Prostate gland (tissue), 2 donors: ENCODE measurements at regions of chrX and their contacts with region 1.

Region 1: GRCh38 chrX:67543818-67544217 is at the start of gene AR:
- DNase-seq: peak; percentile 69
- H3K4me3 ChIP-seq: peak within 1 kb of the TSS; percentile 46 to 53
- H3K27ac ChIP-seq: peak within 1 kb of the TSS; percentile 81 to 83
- H3K4me1 ChIP-seq: no peaks in the 10 kb centered on the region
- H3K27me3 ChIP-seq: no peaks in the 10 kb centered on the region
- CTCF ChIP-seq: peak in 1 of 4 experiments; percentile 15
- POLR2A ChIP-seq: peak; percentile 54
- total RNA-seq, gene AR: 77.4 to 119 TPM

Region 2: DNA sequence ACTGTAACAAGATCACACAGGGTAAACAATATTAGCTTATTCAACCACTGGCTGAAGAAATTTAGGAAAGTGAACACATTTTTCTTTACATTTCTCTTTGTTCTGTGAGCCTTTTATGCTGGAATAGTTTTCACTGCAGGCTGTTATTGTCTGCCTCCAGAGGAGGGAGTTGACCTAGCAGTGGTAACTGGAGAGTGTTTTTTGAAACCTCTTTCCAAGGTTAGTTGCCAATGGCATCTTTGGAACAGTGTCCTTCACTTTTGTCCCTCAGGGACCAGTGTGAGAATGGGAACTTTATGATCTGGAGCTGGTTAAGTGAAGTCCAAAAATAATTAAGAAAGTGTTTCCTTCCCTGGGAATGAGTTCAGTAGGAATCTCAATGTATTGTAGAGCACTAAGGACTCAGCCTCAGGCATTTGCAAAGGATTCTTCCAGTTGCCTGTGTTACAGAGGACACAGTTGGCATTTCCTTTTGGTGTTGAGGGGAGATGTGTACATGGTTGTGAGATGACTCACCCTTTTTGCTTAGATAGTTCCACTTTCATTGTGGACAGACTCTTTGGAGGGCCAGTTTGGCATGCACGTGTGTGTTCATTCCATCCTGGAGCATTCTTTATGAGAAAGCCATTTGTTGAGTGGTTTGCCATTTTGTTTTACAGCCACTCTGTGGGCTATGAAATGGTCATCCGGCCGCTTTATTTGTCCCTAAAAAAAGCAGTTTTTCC is 61.3 kb after region 1 on chrX:
- intact Hi-C with region 1: loop called (anchors 10 kb)
- DNase-seq: no peak
- H3K4me3 ChIP-seq: no peak overlapping the region
- H3K27ac ChIP-seq: no peak overlapping the region
- H3K4me1 ChIP-seq: no peaks in the 10 kb centered on the region
- H3K27me3 ChIP-seq: no peaks in the 10 kb centered on the region
- CTCF ChIP-seq: no peak
- POLR2A ChIP-seq: no peak

Region 3: GRCh38 chrX:67636532-67636931 is 92.7 kb after region 1 on chrX:
- intact Hi-C with region 1: no loop called
- DNase-seq: no peak
- H3K4me3 ChIP-seq: no peak overlapping the region
- H3K27ac ChIP-seq: no peak overlapping the region
- H3K4me1 ChIP-seq: no peaks in the 10 kb centered on the region
- H3K27me3 ChIP-seq: no peaks in the 10 kb centered on the region
- CTCF ChIP-seq: no peak
- POLR2A ChIP-seq: no peak

Region 4: DNA sequence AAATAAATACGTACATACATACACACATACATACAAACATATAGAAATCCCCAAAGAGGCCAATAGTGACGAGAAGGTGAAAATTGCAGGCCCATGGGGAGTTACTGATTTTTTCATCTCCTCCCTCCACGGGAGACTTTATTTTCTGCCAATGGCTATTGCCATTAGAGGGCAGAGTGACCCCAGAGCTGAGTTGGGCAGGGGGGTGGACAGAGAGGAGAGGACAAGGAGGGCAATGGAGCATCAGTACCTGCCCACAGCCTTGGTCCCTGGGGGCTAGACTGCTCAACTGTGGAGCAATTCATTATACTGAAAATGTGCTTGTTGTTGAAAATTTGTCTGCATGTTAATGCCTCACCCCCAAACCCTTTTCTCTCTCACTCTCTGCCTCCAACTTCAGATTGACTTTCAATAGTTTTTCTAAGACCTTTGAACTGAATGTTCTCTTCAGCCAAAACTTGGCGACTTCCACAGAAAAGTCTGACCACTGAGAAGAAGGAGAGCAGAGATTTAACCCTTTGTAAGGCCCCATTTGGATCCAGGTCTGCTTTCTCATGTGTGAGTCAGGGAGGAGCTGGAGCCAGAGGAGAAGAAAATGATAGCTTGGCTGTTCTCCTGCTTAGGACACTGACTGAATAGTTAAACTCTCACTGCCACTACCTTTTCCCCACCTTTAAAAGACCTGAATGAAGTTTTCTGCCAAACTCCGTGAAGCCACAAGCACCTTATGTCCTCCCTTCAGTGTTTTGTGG is 180.7 kb after region 1 on chrX:
- intact Hi-C with region 1: loop called (anchors 10 kb)
- DNase-seq: no peak
- H3K4me3 ChIP-seq: no peak overlapping the region
- H3K27ac ChIP-seq: no peak overlapping the region
- H3K4me1 ChIP-seq: no peaks in the 10 kb centered on the region
- H3K27me3 ChIP-seq: no peaks in the 10 kb centered on the region
- CTCF ChIP-seq: no peak
- POLR2A ChIP-seq: no peak

Region 5: DNA sequence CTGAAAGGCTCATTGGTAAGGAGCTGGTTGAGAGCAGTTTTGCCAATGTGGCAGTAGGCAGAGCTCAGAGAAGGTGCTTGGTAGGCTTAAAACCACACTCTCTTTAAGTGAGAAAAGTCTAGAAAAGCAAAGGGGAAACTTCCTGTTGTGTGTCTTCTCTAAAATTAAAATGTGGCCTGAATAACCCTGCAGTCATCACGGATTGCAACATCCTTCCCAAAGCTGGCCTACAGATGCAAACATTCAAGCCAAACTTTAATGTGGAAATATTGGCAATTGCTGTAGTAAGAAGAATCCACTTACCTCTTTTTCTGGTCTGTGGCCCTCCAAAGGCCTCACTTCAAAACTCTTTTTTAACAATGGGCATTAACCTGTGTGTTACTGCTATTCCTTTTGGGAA is 540.9 kb after region 1 on chrX:
- intact Hi-C with region 1: loop called (anchors 10 kb)
- DNase-seq: no peak
- H3K4me3 ChIP-seq: no peak overlapping the region
- H3K27ac ChIP-seq: no peak overlapping the region
- H3K4me1 ChIP-seq: no peaks in the 10 kb centered on the region
- H3K27me3 ChIP-seq: no peaks in the 10 kb centered on the region
- CTCF ChIP-seq: no peak
- POLR2A ChIP-seq: no peak

Region 6: GRCh38 chrX:68146054-68146453 is 602.2 kb after region 1 on chrX:
- intact Hi-C with region 1: loop called (anchors 10 kb)
- DNase-seq: no peak
- H3K4me3 ChIP-seq: no peak overlapping the region
- H3K27ac ChIP-seq: no peak overlapping the region
- H3K4me1 ChIP-seq: no peaks in the 10 kb centered on the region
- H3K27me3 ChIP-seq: no peaks in the 10 kb centered on the region
- CTCF ChIP-seq: peak in 2 of 4 experiments; percentile 7 to 26
- POLR2A ChIP-seq: no peak